Posterior cingulate gyrus (tissue), 11 donors: ENCODE measurements at regions of chr15 and their contacts with region 1.

Region 1: GRCh38 chr15:77633134-77633912 is 611 bp upstream of the LINGO1 start:
- DNase-seq: peak; percentile 84 to 99 (median 92)

Region 2: GRCh38 chr15:77577366-77577950 is 55.9 kb before region 1 on chr15:
- intact Hi-C with region 1: loop called (anchors 5 kb)
- DNase-seq: peak; percentile 58 to 97 (median 70)

Region 3: DNA sequence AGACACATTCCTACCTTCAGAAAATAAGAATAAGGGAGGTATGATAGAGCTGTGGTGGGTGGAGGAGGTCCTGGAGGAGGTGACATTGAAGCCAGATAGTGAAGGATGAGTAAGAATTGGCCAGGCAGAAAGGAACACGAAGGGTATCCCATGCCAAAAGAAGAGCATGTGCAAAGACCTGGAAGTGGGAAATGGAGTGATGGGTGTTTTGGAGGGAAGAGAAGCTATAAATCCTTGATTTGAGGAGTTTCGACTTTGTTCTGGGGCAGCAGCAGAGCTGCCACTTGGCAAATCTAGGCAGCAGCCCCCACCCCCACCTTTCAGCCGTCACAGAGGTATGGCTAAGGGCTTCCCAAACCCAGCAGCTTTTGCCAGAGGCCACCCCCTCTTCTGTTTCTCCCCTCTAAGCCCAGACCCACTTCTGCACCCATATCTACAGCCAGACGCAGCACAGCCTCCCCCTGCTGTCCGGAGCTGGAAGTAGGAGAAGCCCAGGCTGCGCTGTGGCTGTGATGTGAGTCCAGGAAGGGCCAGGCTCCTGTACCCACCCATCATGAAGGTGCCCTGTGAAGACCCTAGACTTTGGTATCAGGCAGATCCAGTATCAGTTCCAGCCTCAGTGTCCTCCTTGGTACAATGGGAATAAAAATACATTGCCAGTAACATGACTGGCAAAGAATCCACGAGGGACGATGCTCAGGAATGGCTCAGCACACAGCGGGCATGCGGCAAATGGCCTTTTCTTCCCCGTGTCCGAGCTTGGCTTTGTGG is 188.1 kb after region 1 on chr15:
- intact Hi-C with region 1: loop called (anchors 1 kb)
- DNase-seq: peak; percentile 66 to 97 (median 83)

Region 4: DNA sequence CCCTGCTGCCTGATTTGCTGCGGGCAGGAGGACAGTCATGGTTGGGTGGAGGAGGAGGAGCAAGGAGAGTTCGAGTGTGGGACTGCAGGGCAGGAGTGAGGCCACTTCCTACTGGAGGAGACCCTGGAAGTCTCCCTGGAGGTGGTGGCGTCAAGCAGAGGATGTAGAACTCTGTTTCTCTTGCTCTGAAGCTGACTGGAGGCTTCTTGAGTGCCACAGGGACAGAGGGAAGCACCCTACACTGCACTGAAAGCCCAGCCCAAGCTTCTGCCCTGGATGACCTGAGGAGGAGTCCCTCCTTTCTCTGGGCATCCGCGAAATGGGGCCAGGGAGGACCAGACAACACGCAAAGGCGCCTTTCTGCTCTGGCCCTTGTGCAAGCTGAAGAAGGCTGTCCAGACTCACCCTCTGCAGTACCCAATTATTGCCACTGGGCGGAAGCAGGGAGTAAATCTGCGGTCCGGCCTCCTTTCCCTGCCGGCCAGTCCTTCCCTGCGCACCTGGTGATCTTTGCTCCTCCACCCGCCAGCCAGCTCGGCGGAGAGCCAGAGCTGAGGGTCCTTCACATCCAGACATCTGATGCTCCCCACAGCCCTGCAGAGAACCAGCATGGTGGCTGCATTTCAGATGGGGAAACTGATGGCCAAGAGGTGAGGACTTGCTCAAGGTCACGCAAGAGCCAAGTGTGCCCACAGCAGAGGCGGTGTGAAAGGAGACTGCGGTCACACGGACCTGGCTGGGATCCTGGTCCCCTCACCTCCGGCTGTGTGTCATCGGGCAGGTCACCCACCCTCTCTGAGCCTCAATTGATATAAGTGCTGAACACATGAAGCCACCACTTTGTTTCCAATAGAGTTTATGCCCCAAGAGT is 237.1 kb after region 1 on chr15:
- intact Hi-C with region 1: loop called (anchors 10 kb)
- DNase-seq: peak in 9 of 10 donors; percentile 37 to 95 (median 74)